ENCODE measurements at regions of chrX and their contacts with region 1.

Region 1: DNA sequence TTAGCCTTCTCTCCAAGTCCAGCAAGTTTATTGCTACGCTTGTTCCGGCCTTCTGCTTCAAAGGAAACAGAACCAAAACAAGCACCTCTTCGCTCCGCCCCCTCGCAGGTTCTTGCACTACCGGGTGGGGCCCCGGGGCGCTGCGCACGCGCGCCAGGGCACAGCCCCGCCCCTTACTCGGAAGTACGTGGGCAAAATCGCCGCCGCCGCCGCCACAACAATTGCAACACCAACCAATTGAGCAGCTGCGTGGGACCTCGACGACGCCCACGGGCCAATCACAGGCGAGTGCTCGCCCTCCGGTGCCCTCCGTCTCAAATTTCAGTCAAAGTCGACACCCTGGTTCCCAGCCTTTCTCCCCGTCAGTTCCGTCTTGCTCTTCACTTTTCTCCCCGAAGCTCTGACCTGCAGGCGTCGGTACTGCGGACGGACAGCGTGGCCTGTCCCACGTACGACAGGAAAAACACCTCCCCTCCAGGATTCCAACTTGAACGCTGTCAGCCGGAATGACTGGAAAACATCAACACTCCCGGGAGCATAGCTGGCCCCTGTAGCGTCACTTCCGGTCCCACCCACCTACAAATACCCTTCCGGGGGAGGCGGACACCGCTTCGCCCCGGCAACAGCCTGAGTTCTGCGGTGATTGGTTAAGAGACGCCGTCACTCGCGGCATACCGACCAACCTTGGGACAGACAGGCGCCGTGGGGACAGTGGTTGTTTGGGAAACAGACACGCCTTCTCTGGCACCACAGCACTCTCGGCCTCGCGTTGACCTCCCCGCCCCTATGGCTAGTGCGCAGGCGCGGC is 624 bp upstream of the OTUD5 start:
- DNase-seq: peak; percentile 95
- ATAC-seq: peak; percentile 92
- H3K4me3 Mint-ChIP-seq: peak overlapping the region; percentile 93
- H3K27ac Mint-ChIP-seq: peak overlapping the region; percentile 100
- H3K4me1 Mint-ChIP-seq: peaks cover 28% of the 10 kb centered on the region
- H3K27me3 Mint-ChIP-seq: no peaks in the 10 kb centered on the region

Region 2: GRCh38 chrX:48897621-48898306 is 60.3 kb before region 1 on chrX and contains the starts of genes PQBP1 and TIMM17B:
- CTCF ChIA-PET with region 1: no interaction called
- POLR2A ChIA-PET with region 1: interaction called, 5 read pairs
- intact Hi-C with region 1: loop called in 1 of 2 experiments (anchors 1 kb)
- DNase-seq: peak; percentile 92
- ATAC-seq: peak; percentile 94
- H3K4me3 Mint-ChIP-seq: peak within 1 kb of the TSS; percentile 81
- H3K27ac Mint-ChIP-seq: peak within 1 kb of the TSS; percentile 94
- H3K4me1 Mint-ChIP-seq: peaks cover 19% of the 10 kb centered on the region
- H3K27me3 Mint-ChIP-seq: no peaks in the 10 kb centered on the region
- total RNA-seq, gene PQBP1: 73.4 to 75.3 TPM
- total RNA-seq, gene TIMM17B: 54.2 to 58.9 TPM

Region 3: GRCh38 chrX:48917139-48918001 is 40.7 kb before region 1 on chrX:
- CTCF ChIA-PET with region 1: interaction called, 3 read pairs
- POLR2A ChIA-PET with region 1: interaction called, 10 read pairs
- intact Hi-C with region 1: loop called (anchors 1 kb)
- DNase-seq: peak; percentile 92
- ATAC-seq: peak; percentile 34
- H3K4me3 Mint-ChIP-seq: peak overlapping the region; percentile 97
- H3K27ac Mint-ChIP-seq: peak overlapping the region; percentile 95
- H3K4me1 Mint-ChIP-seq: peaks cover 51% of the 10 kb centered on the region
- H3K27me3 Mint-ChIP-seq: no peaks in the 10 kb centered on the region

Region 4: GRCh38 chrX:49002091-49002935 is 44.3 kb after region 1 on chrX and contains the start of gene GRIPAP1:
- CTCF ChIA-PET with region 1: interaction called, 5 read pairs
- POLR2A ChIA-PET with region 1: no interaction called
- intact Hi-C with region 1: loop called (anchors 1 to 5 kb)
- DNase-seq: peak; percentile 87
- ATAC-seq: peak; percentile 82
- H3K4me3 Mint-ChIP-seq: peak within 1 kb of the TSS; percentile 97
- H3K27ac Mint-ChIP-seq: peak within 1 kb of the TSS; percentile 98
- H3K4me1 Mint-ChIP-seq: peaks cover 34% of the 10 kb centered on the region
- H3K27me3 Mint-ChIP-seq: no peaks in the 10 kb centered on the region
- total RNA-seq, gene GRIPAP1: 57.8 to 63.3 TPM

Region 5: GRCh38 chrX:49120099-49120498 is 162.1 kb after region 1 on chrX:
- CTCF ChIA-PET with region 1: no interaction called
- POLR2A ChIA-PET with region 1: no interaction called
- intact Hi-C with region 1: loop called in 1 of 2 experiments (anchors 1 kb)
- DNase-seq: no peak
- ATAC-seq: no peak
- H3K4me3 Mint-ChIP-seq: no peak overlapping the region
- H3K27ac Mint-ChIP-seq: peak overlapping the region; percentile 56
- H3K4me1 Mint-ChIP-seq: peaks cover 20% of the 10 kb centered on the region
- H3K27me3 Mint-ChIP-seq: no peaks in the 10 kb centered on the region

Region 6: GRCh38 chrX:49191033-49191871 is 233.2 kb after region 1 on chrX:
- CTCF ChIA-PET with region 1: no interaction called
- POLR2A ChIA-PET with region 1: no interaction called
- intact Hi-C with region 1: no loop called
- DNase-seq: peak; percentile 89
- ATAC-seq: peak; percentile 91
- H3K4me3 Mint-ChIP-seq: peak overlapping the region; percentile 96
- H3K27ac Mint-ChIP-seq: peak overlapping the region; percentile 97
- H3K4me1 Mint-ChIP-seq: peaks cover 23% of the 10 kb centered on the region
- H3K27me3 Mint-ChIP-seq: no peaks in the 10 kb centered on the region